ENCODE measurements at regions of chr15 and their contacts with region 1.

Region 1: GRCh38 chr15:51380999-51381795 is 39.7 kb downstream of the GLDN start:
- DNase-seq: peak in 1 of 3 donors; percentile 62
- ATAC-seq: peak; percentile 93
- H3K4me3 ChIP-seq: no peak overlapping the region
- H3K4me1 ChIP-seq: no peaks in the 10 kb centered on the region
- CTCF ChIP-seq: peak; percentile 55

Region 2: GRCh38 chr15:51162865-51163762 is 218.1 kb before region 1 on chr15:
- intact Hi-C with region 1: loop called in 1 of 2 experiments (anchors 5 kb)
- DNase-seq: peak in 2 of 3 donors; percentile 66 to 87
- ATAC-seq: peak; percentile 91
- H3K4me3 ChIP-seq: no peak overlapping the region
- H3K4me1 ChIP-seq: peaks cover 7% of the 10 kb centered on the region
- CTCF ChIP-seq: peak; percentile 93

Region 3: DNA sequence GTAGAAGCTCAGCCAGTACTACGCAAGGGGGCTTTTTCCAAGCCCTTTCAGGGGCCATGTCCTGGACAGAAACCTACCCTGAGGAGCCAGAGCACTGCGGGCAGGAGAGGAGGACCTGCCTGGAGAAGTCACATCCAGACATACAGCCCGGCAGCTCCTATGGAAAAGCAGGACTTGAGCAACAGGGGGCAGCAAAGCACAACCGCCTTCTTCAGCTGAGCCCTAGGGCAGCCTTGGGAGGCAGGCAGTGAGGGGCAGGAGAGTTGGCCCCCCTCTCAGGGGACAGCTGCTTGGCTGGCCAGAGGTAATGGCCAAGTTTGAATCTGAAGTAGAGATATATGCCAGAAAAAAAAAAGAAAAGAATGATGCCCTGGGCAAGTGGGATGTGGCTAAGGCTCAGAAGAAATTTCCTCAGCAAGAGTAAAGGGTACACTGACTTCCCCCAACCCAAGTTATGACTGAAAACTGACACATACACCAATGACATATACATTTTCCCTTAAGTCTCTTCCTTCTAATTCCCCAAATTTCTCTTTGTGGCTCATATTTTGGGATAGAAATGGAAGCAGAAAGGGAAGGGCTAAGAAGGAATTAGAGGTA is 99.7 kb before region 1 on chr15:
- intact Hi-C with region 1: loop called (anchors 2 to 5 kb)
- DNase-seq: peak; percentile 57 to 85 (median 74)
- ATAC-seq: peak; percentile 93
- H3K4me3 ChIP-seq: no peak overlapping the region
- H3K4me1 ChIP-seq: peaks cover 5% of the 10 kb centered on the region
- CTCF ChIP-seq: peak; percentile 59

Region 4: GRCh38 chr15:51629612-51630011 is 248.4 kb after region 1 on chr15:
- intact Hi-C with region 1: no loop called
- DNase-seq: no peak
- ATAC-seq: peak; percentile 58
- H3K4me3 ChIP-seq: no peak overlapping the region
- H3K4me1 ChIP-seq: peaks cover under 1% of the 10 kb centered on the region
- CTCF ChIP-seq: no peak